CD8-positive, alpha-beta memory T cell (primary cell): ENCODE measurements at regions of chr11 and their contacts with region 1.

Region 1: DNA sequence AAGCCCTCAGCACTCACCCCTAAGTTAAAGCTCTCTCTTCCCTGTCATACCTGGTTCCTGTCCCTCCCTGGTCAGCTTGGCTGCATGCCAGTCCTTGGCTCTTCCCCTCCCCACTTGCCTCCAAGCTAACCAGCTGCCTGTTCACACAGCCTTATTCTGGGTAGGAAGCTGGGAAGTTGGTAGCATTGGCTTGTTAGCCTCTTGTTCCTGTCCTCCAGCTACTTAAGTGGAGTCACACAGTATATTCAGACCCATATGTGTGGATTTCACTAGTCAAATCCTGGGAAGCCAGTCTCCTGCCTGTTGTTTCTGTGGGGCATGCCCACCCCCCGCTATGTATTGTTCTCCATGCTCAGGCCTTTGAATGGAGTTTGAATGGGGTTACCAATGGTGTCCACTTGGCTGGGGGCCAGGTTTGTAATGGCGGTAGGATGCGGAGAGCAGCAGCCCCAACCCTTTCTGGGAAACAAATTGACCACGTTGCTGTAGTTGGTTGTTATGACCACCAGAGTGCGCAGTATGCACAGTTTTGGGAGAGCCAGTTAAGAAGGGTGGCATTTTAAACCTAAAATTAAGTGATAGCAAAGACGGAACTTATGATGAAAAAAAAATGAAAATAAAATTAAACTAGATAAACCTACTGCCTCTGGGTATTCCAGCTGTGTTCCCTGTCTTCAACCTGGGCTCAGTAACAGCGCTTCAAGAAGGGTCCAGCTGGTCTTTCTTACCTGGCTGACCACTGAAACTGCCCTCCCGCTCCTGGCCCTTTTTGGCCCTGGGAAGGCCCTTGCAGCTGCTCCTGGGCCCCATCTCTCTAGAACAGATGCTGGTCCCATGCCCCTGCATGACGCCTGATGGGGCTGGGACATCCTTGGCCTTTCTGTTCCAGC is 10.7 kb upstream of the RPS3 start:
- DNase-seq: peak; percentile 39 to 81 (median 61)
- H3K4me3 ChIP-seq: no peak overlapping the region
- H3K4me3 Mint-ChIP-seq: no peak overlapping the region
- H3K27ac ChIP-seq: no peak overlapping the region
- H3K27ac Mint-ChIP-seq: no peak overlapping the region
- H3K4me1 ChIP-seq: peaks cover 19% of the 10 kb centered on the region
- H3K4me1 Mint-ChIP-seq: peaks cover 9 to 10% (median 9%) of the 10 kb centered on the region in 3 donors
- H3K27me3 ChIP-seq: no peaks in the 10 kb centered on the region
- H3K27me3 Mint-ChIP-seq: peaks cover 3 to 4% of the 10 kb centered on the region in 2 donors

Region 2: GRCh38 chr11:75174781-75175370 is 213.8 kb before region 1 on chr11:
- CTCF ChIA-PET with region 1: no interaction called
- POLR2A ChIA-PET with region 1: no interaction called
- DNase-seq: no peak
- H3K4me3 ChIP-seq: no peak overlapping the region
- H3K4me3 Mint-ChIP-seq: no peak overlapping the region
- H3K27ac ChIP-seq: no peak overlapping the region
- H3K27ac Mint-ChIP-seq: peak overlapping the region in 5 of 8 donors; percentile 43 to 88 (median 67)
- H3K4me1 ChIP-seq: peaks cover 10% of the 10 kb centered on the region
- H3K4me1 Mint-ChIP-seq: peaks cover 7 to 13% (median 9%) of the 10 kb centered on the region in 3 donors
- H3K27me3 ChIP-seq: no peaks in the 10 kb centered on the region
- H3K27me3 Mint-ChIP-seq: peaks cover 0 to 11% of the 10 kb centered on the region in 2 donors

Region 3: GRCh38 chr11:75280227-75280701 is 108.4 kb before region 1 on chr11:
- CTCF ChIA-PET with region 1: interaction called, 325 read pairs
- POLR2A ChIA-PET with region 1: interaction called, 3 read pairs
- DNase-seq: peak; percentile 51 to 78 (median 60)
- H3K4me3 ChIP-seq: no peak overlapping the region
- H3K4me3 Mint-ChIP-seq: peak overlapping the region in 1 of 7 donors; percentile 29
- H3K27ac ChIP-seq: no peak overlapping the region
- H3K27ac Mint-ChIP-seq: peak overlapping the region in 7 of 8 donors; percentile 71 to 84 (median 80)
- H3K4me1 ChIP-seq: peaks cover 35% of the 10 kb centered on the region
- H3K4me1 Mint-ChIP-seq: peaks cover 36 to 42% (median 42%) of the 10 kb centered on the region in 3 donors
- H3K27me3 ChIP-seq: no peaks in the 10 kb centered on the region
- H3K27me3 Mint-ChIP-seq: no peaks in the 10 kb centered on the region

Region 4: GRCh38 chr11:75351791-75352587 is 36.6 kb before region 1 on chr11:
- CTCF ChIA-PET with region 1: interaction called, 17 read pairs
- POLR2A ChIA-PET with region 1: interaction called, 3 read pairs
- DNase-seq: peak; percentile 20 to 79 (median 68)
- H3K4me3 ChIP-seq: peak overlapping the region; percentile 72
- H3K4me3 Mint-ChIP-seq: peak overlapping the region; percentile 89 to 96 (median 92)
- H3K27ac ChIP-seq: peak overlapping the region; percentile 76
- H3K27ac Mint-ChIP-seq: peak overlapping the region; percentile 78 to 97 (median 88)
- H3K4me1 ChIP-seq: peaks cover 50% of the 10 kb centered on the region
- H3K4me1 Mint-ChIP-seq: peaks cover 46 to 62% (median 58%) of the 10 kb centered on the region in 3 donors
- H3K27me3 ChIP-seq: no peaks in the 10 kb centered on the region
- H3K27me3 Mint-ChIP-seq: peaks cover 2 to 8% of the 10 kb centered on the region in 2 donors

Region 5: GRCh38 chr11:75406338-75406777 is 17.7 kb after region 1 on chr11:
- CTCF ChIA-PET with region 1: interaction called, 17 read pairs
- POLR2A ChIA-PET with region 1: no interaction called
- DNase-seq: no peak
- H3K4me3 ChIP-seq: no peak overlapping the region
- H3K4me3 Mint-ChIP-seq: no peak overlapping the region
- H3K27ac ChIP-seq: no peak overlapping the region
- H3K27ac Mint-ChIP-seq: peak overlapping the region in 6 of 8 donors; percentile 15 to 40 (median 30)
- H3K4me1 ChIP-seq: peaks cover 20% of the 10 kb centered on the region
- H3K4me1 Mint-ChIP-seq: peaks cover 43 to 60% (median 46%) of the 10 kb centered on the region in 3 donors
- H3K27me3 ChIP-seq: no peaks in the 10 kb centered on the region
- H3K27me3 Mint-ChIP-seq: no peaks in the 10 kb centered on the region

Region 6: DNA sequence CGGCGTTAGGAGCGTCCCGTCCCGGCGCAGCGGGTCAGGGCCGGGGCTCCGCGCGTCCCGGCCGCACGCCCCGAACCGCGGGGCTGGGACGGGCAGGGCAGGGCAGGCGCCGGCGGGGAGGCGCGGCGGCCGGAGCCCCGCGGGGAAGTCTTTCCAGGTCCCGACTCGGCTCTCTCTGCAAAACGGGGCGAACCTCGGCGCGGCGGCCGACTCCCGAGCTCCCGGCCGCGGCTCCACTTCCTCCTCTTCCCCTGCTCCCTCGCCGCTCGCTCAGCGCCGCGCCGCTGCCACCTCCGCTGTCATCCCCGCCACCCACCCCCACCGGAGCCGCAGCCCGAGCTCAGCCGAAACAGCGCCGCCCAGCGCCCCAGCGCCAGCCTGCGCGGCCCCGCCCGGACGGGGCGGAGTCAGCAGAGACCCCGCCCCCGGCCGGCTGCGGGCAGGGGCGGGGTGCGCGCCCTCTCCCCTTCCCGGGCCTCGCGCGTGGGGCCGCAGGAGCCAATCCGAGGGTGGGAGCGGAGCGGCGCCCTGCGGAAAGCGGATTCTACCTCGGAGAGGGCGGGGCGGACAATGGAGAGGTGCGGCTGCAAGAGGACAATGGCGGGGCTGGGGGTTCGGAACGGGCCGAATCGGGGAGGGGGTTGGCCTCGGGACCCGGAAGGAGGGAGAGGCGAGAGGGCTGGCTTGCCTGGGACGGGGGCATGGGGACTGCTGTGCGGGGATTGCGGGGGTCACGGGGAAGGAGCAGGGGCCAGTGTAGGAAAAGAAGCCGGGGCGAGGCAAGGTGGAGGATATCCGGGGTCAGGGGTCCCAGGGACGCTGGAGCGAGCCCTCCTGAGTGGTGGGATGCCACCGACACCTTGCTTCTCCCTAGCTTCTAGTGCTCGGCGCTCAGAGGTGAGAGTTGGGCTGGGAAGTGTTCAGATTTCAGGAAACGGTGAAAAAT is 137.2 kb after region 1 on chr11 and contains the start of gene GDPD5:
- CTCF ChIA-PET with region 1: interaction called, 53 read pairs
- POLR2A ChIA-PET with region 1: no interaction called
- DNase-seq: peak; percentile 77 to 89 (median 86)
- H3K4me3 ChIP-seq: peak within 1 kb of the TSS; percentile 63
- H3K4me3 Mint-ChIP-seq: peak within 1 kb of the TSS; percentile 87 to 97 (median 91)
- H3K27ac ChIP-seq: peak within 1 kb of the TSS; percentile 31
- H3K27ac Mint-ChIP-seq: peak within 1 kb of the TSS in 7 of 8 donors; percentile 34 to 95 (median 79)
- H3K4me1 ChIP-seq: peaks cover 25% of the 10 kb centered on the region
- H3K4me1 Mint-ChIP-seq: peaks cover 30 to 49% (median 39%) of the 10 kb centered on the region in 3 donors
- H3K27me3 ChIP-seq: no peaks in the 10 kb centered on the region
- H3K27me3 Mint-ChIP-seq: peaks cover 0 to 3% of the 10 kb centered on the region in 2 donors
- total RNA-seq, gene GDPD5: 8.9 to 9.1 TPM